Heart right ventricle (tissue), 16 donors: ENCODE measurements at regions of chr15 and their contacts with region 1.

Region 1: DNA sequence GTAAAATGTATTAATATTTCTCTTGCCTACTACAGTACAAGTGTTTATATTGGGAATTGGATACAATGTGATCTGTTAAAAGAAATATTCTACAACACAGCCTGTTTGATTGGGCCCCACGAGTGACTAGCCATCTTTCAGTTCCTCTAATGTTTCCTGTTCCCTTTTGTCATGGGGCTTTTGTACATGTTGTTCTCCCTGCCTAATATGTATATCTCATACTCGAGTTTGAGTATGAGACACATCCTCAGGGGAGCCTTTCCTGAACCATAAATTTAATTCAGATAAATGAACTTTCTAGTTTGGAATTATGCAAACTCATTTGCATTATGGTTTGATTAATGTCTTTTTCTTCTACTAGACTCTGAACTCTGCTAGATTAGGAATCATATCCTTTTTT is 65.5 kb downstream of the MEF2A start:
- DNase-seq: no peak
- ATAC-seq: peak in 6 of 8 donors; percentile 41 to 84 (median 76)
- H3K4me3 ChIP-seq: no peak overlapping the region
- H3K27ac ChIP-seq: peak overlapping the region in 8 of 10 donors; percentile 10 to 76 (median 42)
- H3K4me1 ChIP-seq: peaks cover 0 to 87% (median 72%) of the 10 kb centered on the region in 9 donors
- H3K27me3 ChIP-seq: no peaks in the 10 kb centered on the region
- CTCF ChIP-seq: no peak

Region 2: DNA sequence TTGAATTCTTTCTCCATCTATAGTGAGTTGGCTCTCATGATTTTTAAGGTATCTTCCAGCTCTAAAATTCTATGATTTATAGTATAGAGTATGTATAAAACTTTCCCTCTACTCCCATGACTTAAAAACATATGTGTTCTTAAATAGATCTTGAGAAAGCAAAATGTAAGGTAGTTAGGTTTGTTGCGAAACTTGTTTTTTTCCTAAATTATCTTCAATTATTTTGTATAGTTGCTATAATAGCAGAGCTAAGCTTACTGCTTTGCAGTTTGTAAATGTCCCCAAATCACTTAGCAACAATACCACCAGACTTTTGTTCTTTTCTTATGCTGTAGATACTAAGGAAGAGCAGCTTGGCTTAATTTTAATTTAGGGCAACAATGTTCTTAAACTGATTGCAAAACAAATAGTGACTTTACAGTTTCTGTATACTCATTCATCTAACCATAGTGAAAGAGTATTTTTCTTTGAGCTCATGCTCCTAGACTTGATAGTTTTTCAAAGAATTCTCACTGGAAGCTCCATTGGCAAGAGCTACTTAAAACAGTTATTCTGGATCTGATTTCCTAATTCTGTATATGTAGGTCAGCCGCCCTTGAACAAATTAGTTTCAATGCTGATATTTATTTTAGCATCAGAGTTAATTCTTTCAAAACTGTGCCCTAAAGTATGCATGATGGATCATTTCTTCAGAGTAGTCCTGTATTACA is 40.8 kb after region 1 on chr15:
- intact Hi-C with region 1: loop called in 1 of 10 experiments (anchors 5 kb)
- DNase-seq: no peak
- ATAC-seq: no peak
- H3K4me3 ChIP-seq: no peak overlapping the region
- H3K27ac ChIP-seq: peak overlapping the region in 1 of 10 donors; percentile 19
- H3K4me1 ChIP-seq: peaks cover 0 to 45% (median 19%) of the 10 kb centered on the region in 9 donors
- H3K27me3 ChIP-seq: no peaks in the 10 kb centered on the region
- CTCF ChIP-seq: no peak

Region 3: DNA sequence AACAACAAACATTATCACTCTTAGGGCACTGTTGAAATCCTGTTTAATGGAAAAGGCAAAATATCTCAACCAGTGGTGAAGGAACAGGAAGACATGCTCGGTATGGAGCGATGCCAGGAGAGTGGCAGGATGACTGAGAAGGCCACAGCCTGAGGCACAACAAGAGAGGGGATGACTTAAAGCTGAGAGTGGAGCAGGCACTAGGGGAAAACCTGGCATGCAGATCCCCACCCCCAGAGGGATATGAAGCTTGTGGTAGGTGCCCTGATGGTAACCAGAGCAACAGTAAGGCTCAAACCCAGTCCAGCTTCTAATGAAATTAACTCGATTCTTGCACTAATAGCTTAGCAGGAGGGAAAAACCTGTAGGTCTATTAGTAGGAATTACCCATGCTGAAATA is 61.6 kb after region 1 on chr15:
- intact Hi-C with region 1: no loop called
- DNase-seq: no peak
- ATAC-seq: peak in 4 of 8 donors; percentile 6 to 27 (median 20)
- H3K4me3 ChIP-seq: no peak overlapping the region
- H3K27ac ChIP-seq: peak overlapping the region in 3 of 10 donors; percentile 2 to 44 (median 31)
- H3K4me1 ChIP-seq: peaks cover 0 to 26% (median 10%) of the 10 kb centered on the region in 9 donors
- H3K27me3 ChIP-seq: no peaks in the 10 kb centered on the region
- CTCF ChIP-seq: no peak